ENCODE measurements at regions of chrX and their contacts with region 1.

Region 1: DNA sequence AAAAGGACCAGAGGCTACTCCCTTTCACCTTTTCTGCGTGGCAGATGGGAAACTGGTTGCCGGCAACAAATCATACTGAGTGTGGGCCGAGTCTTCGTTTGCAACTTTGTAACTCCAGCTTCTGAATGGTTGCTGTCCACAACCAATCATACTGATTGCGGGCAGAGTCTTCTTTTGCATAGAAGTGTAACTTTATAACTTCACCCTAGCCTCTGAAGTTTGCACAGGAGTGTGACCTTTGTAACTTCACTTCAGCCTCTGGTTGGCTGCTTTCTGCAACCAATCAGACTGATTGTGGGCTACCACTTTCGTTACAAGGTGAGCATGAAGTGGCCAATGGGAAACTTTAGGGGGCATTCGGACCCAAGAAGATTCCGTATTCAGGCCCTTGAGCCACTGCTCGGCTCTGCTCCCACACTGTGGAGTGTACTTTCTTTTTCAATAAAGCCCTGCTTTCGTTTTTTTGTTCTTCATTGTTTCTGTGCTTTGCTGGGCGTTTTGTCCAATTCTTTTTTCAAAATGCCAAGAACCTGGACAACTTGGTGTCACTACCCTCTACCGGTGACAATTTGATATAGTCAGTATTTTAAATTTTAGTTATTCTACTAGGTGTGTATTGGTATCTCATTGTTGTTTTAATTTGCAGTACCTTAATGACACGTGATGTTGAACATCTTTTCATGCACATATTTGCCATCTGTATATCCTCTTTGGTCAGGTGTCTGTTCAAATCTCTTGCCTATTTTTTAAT is 9.0 kb upstream of the PAGE5 start:
- DNase-seq: peak; percentile 43 to 57
- H3K4me3 ChIP-seq: peak overlapping the region; percentile 28
- H3K4me3 Mint-ChIP-seq: peak overlapping the region; percentile 68
- H3K27ac Mint-ChIP-seq: no peak overlapping the region
- H3K4me1 ChIP-seq: no peaks in the 10 kb centered on the region
- H3K4me1 Mint-ChIP-seq: no peaks in the 10 kb centered on the region
- H3K27me3 ChIP-seq: no peaks in the 10 kb centered on the region
- H3K27me3 Mint-ChIP-seq: no peaks in the 10 kb centered on the region
- CTCF ChIP-seq: peak in 1 of 2 experiments; percentile 18

Region 2: GRCh38 chrX:55160685-55161552 is 50.2 kb before region 1 on chrX:
- CTCF ChIA-PET with region 1: no interaction called
- POLR2A ChIA-PET with region 1: no interaction called
- intact Hi-C with region 1: loop called (anchors 1 kb)
- DNase-seq: peak; percentile 86 to 87
- H3K4me3 ChIP-seq: peak overlapping the region; percentile 70
- H3K4me3 Mint-ChIP-seq: peak overlapping the region; percentile 98
- H3K27ac Mint-ChIP-seq: peak overlapping the region; percentile 98
- H3K4me1 ChIP-seq: peaks cover 3% of the 10 kb centered on the region; the same call in 1 of the 2 replicates
- H3K4me1 Mint-ChIP-seq: no peaks in the 10 kb centered on the region
- H3K27me3 ChIP-seq: no peaks in the 10 kb centered on the region
- H3K27me3 Mint-ChIP-seq: no peaks in the 10 kb centered on the region
- CTCF ChIP-seq: peak; percentile 44 to 79